ENCODE measurements at regions of chr18 and their contacts with region 1.

Region 1: GRCh38 chr18:11654736-11655605 is 34.1 kb upstream of the GNAL start:
- DNase-seq: peak in 4 of 9 donors; percentile 8 to 55 (median 16)
- ATAC-seq: peak; percentile 34
- H3K4me3 ChIP-seq: no peak overlapping the region
- H3K4me3 Mint-ChIP-seq: peak overlapping the region in 2 of 10 donors; percentile 11 to 12
- H3K27ac ChIP-seq: no peak overlapping the region
- H3K27ac Mint-ChIP-seq: no peak overlapping the region
- H3K4me1 ChIP-seq: no peaks in the 10 kb centered on the region
- H3K4me1 Mint-ChIP-seq: peaks cover 0 to 6% (median 0%) of the 10 kb centered on the region in 7 donors
- H3K27me3 ChIP-seq: no peaks in the 10 kb centered on the region
- H3K27me3 Mint-ChIP-seq: peaks cover 33 to 63% (median 46%) of the 10 kb centered on the region in 5 donors

Region 2: DNA sequence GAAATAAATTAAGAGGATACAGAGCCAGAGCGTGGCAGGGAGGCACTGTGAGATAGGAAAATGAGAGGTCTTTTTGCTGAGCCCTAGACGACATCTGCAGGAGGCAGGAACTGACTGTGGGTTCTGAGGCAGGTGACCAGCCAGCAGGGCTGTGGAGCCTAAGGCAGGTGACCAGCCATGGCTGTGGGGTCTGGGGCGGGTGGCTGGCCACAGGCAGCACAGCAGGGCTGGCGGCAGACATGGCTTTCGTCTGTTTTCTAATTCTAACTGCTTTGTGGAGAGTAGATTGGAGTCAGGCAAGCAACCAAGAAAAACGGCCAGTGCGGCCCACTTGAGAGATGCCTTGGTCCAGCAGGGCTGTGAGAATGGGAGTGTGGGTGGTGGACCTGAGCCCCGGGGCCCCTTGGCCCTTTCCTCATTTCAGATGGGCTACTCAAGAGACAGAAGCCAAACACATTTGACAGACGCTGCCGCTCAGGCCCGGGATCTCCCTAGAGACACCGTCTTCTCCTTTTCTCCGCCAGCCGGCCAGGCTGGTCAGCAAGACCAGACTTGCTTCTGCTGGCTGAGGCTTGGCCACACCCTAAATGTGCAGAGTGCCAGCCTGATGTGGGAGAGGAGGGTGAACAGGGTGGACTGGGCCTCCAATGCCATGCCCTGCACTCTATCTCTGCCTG is 14.4 kb after region 1 on chr18:
- CTCF ChIA-PET with region 1: no interaction called
- POLR2A ChIA-PET with region 1: no interaction called
- intact Hi-C with region 1: no loop called
- DNase-seq: no peak
- ATAC-seq: no peak
- H3K4me3 ChIP-seq: no peak overlapping the region
- H3K4me3 Mint-ChIP-seq: no peak overlapping the region
- H3K27ac ChIP-seq: no peak overlapping the region
- H3K27ac Mint-ChIP-seq: no peak overlapping the region
- H3K4me1 ChIP-seq: no peaks in the 10 kb centered on the region
- H3K4me1 Mint-ChIP-seq: no peaks in the 10 kb centered on the region
- H3K27me3 ChIP-seq: no peaks in the 10 kb centered on the region
- H3K27me3 Mint-ChIP-seq: peaks cover 7 to 39% (median 16%) of the 10 kb centered on the region in 5 donors

Region 3: GRCh38 chr18:11741505-11742145 is 86.7 kb after region 1 on chr18:
- CTCF ChIA-PET with region 1: no interaction called
- POLR2A ChIA-PET with region 1: no interaction called
- intact Hi-C with region 1: loop called in 1 of 2 experiments (anchors 5 kb)
- DNase-seq: peak in 1 of 9 donors; percentile 12
- ATAC-seq: peak; percentile 49
- H3K4me3 ChIP-seq: no peak overlapping the region
- H3K4me3 Mint-ChIP-seq: no peak overlapping the region
- H3K27ac ChIP-seq: no peak overlapping the region
- H3K27ac Mint-ChIP-seq: no peak overlapping the region
- H3K4me1 ChIP-seq: no peaks in the 10 kb centered on the region
- H3K4me1 Mint-ChIP-seq: no peaks in the 10 kb centered on the region
- H3K27me3 ChIP-seq: no peaks in the 10 kb centered on the region
- H3K27me3 Mint-ChIP-seq: peaks cover 26 to 53% (median 30%) of the 10 kb centered on the region in 5 donors

Region 4: DNA sequence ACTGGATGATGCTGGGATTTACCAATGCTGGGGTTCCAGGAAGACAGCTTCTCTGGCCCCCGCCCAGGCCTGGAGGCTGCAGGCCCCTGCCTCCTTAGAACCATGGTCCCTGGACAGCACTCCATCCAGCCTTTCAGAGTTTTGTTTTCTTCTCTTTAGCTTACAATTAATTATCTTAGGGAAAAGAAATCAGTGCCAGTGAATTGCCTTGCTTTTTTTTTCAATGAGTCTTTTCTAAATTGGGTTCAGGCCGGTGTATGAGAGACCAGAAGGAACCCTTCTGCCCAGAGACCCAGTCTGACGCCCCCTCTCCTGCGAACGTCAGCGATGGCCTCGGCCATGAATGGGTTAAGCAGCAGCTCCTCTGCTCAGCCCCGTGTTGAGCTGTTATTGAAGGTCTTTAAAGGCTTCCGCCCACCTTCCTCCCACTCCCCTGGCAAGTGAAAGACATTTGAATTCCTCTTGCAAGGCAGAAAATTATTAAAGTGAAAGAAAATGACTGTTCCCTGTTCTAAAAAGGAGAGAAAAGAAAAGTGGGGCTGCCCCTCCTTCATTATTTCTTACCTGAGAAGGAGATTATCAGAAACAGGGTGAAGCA is 130.6 kb after region 1 on chr18:
- CTCF ChIA-PET with region 1: no interaction called
- POLR2A ChIA-PET with region 1: no interaction called
- intact Hi-C with region 1: no loop called
- DNase-seq: no peak
- ATAC-seq: no peak
- H3K4me3 ChIP-seq: no peak overlapping the region
- H3K4me3 Mint-ChIP-seq: no peak overlapping the region
- H3K27ac ChIP-seq: no peak overlapping the region
- H3K27ac Mint-ChIP-seq: no peak overlapping the region
- H3K4me1 ChIP-seq: no peaks in the 10 kb centered on the region
- H3K4me1 Mint-ChIP-seq: peaks cover 0 to 3% (median 0%) of the 10 kb centered on the region in 7 donors
- H3K27me3 ChIP-seq: no peaks in the 10 kb centered on the region
- H3K27me3 Mint-ChIP-seq: peaks cover 0 to 38% (median 5%) of the 10 kb centered on the region in 5 donors

Region 5: DNA sequence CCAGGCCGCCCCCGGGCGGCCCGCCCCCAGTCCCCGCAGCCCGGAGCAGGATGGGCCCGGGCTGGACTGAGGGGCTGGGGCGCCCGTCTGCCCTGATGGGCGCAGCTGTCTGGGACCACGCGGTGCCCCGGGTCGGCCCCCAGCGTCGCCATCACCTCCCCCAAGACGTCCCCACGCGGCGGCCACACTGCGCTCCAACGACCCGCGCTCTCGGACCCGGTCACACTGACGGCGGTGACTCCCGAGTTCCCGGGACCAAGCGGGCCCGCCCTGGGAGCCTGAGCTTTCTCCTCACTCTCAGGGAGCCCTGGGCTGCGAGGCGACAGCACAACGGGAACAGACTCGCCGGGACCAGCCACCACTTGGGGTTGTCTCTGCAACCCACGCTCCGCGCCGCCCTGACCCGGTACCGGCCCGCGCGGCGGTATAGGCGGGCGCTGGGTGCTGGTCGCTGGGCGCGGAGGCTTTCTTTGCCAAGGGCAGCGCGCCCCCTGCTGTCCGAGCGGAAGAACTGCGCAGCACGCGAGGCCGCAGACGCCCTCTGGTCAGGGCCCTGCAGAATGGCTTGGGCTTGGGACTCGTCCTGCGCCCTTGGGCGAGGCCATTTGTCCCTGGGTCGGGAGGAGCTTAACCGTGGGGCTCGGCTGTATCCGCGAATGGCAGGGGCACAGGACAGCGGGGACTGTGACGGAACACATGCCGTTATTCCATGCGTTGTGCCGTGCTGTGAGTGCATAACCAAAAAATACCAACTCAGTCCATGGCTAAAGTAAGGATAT is 383.9 kb after region 1 on chr18:
- CTCF ChIA-PET with region 1: interaction called, 3 read pairs
- POLR2A ChIA-PET with region 1: no interaction called
- intact Hi-C with region 1: loop called in 1 of 2 experiments (anchors 1 kb)
- DNase-seq: peak; percentile 41 to 84 (median 68)
- ATAC-seq: peak; percentile 95
- H3K4me3 ChIP-seq: peak overlapping the region; percentile 52
- H3K4me3 Mint-ChIP-seq: peak overlapping the region; percentile 59 to 79 (median 72)
- H3K27ac ChIP-seq: no peak overlapping the region
- H3K27ac Mint-ChIP-seq: no peak overlapping the region
- H3K4me1 ChIP-seq: no peaks in the 10 kb centered on the region
- H3K4me1 Mint-ChIP-seq: peaks cover 0 to 19% (median 0%) of the 10 kb centered on the region in 7 donors
- H3K27me3 ChIP-seq: peaks cover 0 to 3% of the 10 kb centered on the region in 2 donors
- H3K27me3 Mint-ChIP-seq: peaks cover 10 to 21% (median 14%) of the 10 kb centered on the region in 5 donors

Region 6: DNA sequence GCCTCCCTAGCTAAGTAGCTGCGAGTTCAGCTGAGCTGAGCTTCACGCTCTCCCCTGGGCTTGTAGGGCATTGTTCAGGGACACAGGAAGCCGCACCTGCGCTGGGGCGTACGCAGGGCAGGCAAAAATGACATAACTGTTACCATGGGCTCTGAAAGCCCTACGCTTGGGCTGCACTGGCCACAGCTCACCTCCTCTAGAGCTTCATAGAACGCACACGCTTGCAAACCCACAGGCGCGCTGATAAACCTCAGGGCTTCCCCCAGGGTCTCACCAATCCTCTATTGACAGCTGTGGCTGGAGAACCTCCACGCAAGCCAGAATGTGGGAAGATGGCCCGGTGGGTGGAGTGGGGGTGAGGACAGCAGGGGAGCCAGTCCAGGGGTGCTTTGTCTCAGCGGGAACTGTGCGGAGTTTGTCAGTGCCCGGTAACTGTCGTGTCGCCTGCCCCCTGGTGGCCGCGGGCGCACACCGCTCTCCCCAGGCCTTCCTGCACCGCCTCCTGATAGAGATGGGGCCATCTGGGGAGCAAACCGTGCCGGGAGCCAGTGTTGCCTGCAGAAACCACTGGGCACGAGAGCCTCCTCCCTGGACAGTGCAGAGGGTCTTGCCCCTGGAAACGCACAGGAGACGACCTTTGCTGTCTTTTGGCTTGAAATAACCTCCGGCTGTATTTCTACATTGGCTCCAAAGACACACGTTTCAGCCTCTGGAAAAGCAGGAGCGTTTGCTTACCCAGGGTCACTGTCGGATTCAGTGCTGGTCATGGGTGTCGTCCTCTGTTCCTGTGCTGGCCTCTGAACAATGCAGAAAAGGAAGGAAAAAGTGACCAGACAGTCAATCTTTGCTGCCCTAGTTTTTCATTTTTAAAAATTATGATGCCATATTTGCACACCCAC is 582.2 kb after region 1 on chr18:
- CTCF ChIA-PET with region 1: no interaction called
- POLR2A ChIA-PET with region 1: no interaction called
- intact Hi-C with region 1: loop called (anchors 5 kb)
- DNase-seq: peak in 7 of 9 donors; percentile 24 to 78 (median 49)
- ATAC-seq: peak; percentile 86
- H3K4me3 ChIP-seq: no peak overlapping the region
- H3K4me3 Mint-ChIP-seq: no peak overlapping the region
- H3K27ac ChIP-seq: no peak overlapping the region
- H3K27ac Mint-ChIP-seq: no peak overlapping the region
- H3K4me1 ChIP-seq: no peaks in the 10 kb centered on the region
- H3K4me1 Mint-ChIP-seq: peaks cover 0 to 5% (median 0%) of the 10 kb centered on the region in 7 donors
- H3K27me3 ChIP-seq: no peaks in the 10 kb centered on the region
- H3K27me3 Mint-ChIP-seq: peaks cover 16 to 42% (median 36%) of the 10 kb centered on the region in 5 donors